ENCODE measurements at regions of chr3 and their contacts with region 1.

Region 1: DNA sequence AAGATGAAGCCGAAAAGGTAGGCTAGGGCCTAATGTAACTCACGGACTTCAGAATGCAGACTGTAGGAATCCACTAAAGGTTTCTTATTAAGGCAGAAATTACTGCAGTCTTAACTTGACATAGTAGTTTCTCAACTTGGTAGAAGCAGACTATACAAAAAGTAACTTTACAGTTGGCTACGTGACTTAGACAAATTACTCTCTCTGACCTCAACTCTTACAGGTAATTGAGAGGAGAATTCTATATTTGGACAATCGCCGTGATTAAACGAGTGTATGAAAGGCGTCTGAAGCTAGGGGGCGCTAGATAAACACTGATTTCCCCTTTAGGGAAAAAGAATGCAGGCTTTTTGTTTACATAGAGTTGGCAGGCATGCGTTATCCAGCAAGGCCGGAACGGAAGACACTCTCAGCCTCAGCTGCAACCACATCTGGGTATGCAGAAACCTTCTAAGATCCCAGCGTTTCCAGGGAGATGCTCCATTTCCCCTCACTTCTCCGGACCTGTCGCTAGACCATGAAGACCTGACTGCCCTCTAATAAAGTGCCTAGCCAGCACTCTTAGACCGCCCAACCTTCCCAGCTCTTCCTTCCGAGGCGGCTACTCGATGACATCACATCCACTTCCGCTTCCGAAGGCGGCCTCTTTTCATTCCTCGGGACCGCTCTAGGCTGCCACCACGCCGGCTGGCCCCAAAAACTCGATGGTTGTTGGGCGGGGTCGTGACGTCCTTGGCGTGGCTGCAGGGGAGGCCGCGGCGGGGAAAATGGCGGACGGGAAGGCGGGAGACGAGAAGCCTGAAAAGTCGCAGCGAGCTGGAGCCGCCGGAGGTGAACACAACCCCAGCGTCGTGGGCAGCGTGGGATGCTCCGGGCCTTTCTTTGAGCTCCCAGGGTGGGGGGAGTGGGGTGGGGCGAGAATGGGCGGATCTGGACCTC is at the start of gene PCNP:
- DNase-seq: peak; percentile 100
- H3K4me3 Mint-ChIP-seq: peak within 1 kb of the TSS; percentile 91
- H3K27ac Mint-ChIP-seq: peak within 1 kb of the TSS; percentile 94
- H3K4me1 Mint-ChIP-seq: peaks cover 61% of the 10 kb centered on the region
- H3K27me3 Mint-ChIP-seq: no peaks in the 10 kb centered on the region
- total RNA-seq, gene PCNP: 231 to 236 TPM

Region 2: GRCh38 chr3:100708967-100709841 is 864.5 kb before region 1 on chr3 and contains the start of gene TFG:
- CTCF ChIA-PET with region 1: no interaction called
- POLR2A ChIA-PET with region 1: interaction called, 3 read pairs
- intact Hi-C with region 1: loop called (anchors 1 kb)
- DNase-seq: peak; percentile 98
- H3K4me3 Mint-ChIP-seq: peak within 1 kb of the TSS; percentile 81
- H3K27ac Mint-ChIP-seq: peak within 1 kb of the TSS; percentile 95
- H3K4me1 Mint-ChIP-seq: peaks cover 40% of the 10 kb centered on the region
- H3K27me3 Mint-ChIP-seq: peaks cover 9% of the 10 kb centered on the region
- total RNA-seq, gene TFG: 55.5 to 60.3 TPM

Region 3: GRCh38 chr3:101466465-101467309 is 107.0 kb before region 1 on chr3:
- CTCF ChIA-PET with region 1: interaction called, 3 read pairs
- POLR2A ChIA-PET with region 1: no interaction called
- intact Hi-C with region 1: loop called (anchors 5 kb)
- DNase-seq: peak; percentile 86
- H3K4me3 Mint-ChIP-seq: peak overlapping the region; percentile 74
- H3K27ac Mint-ChIP-seq: peak overlapping the region; percentile 84
- H3K4me1 Mint-ChIP-seq: peaks cover 51% of the 10 kb centered on the region
- H3K27me3 Mint-ChIP-seq: no peaks in the 10 kb centered on the region

Region 4: GRCh38 chr3:101561630-101562328 is 11.9 kb before region 1 on chr3 and contains the start of gene TRMT10C:
- CTCF ChIA-PET with region 1: interaction called, 24 read pairs
- POLR2A ChIA-PET with region 1: interaction called, 23 read pairs
- intact Hi-C with region 1: loop called (anchors 1 kb)
- DNase-seq: peak; percentile 96
- H3K4me3 Mint-ChIP-seq: peak within 1 kb of the TSS; percentile 97
- H3K27ac Mint-ChIP-seq: peak within 1 kb of the TSS; percentile 96
- H3K4me1 Mint-ChIP-seq: peaks cover 37% of the 10 kb centered on the region
- H3K27me3 Mint-ChIP-seq: peaks cover 3% of the 10 kb centered on the region
- total RNA-seq, gene TRMT10C: 39.5 to 43.2 TPM

Region 5: DNA sequence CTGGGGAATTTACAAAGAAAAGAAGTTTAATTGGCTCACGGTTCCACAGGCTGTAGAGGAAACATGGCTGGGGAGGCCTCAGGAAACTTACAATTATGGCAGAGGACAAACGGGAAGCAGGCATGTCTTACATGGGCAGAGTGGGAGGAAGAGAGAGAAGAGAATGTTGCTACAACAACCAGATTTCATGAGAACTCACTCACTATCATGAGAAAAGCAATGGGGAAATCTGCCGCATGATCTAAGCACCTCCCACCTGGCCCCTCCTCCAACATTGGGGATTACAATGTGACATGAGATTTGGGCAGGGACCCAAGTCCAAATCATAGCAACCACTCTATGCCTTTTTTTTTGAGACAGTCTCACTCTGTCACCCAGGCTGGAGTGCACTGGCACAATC is 29.0 kb after region 1 on chr3:
- CTCF ChIA-PET with region 1: no interaction called
- POLR2A ChIA-PET with region 1: no interaction called
- intact Hi-C with region 1: no loop called
- DNase-seq: no peak
- H3K4me3 Mint-ChIP-seq: no peak overlapping the region
- H3K27ac Mint-ChIP-seq: no peak overlapping the region
- H3K4me1 Mint-ChIP-seq: no peaks in the 10 kb centered on the region
- H3K27me3 Mint-ChIP-seq: no peaks in the 10 kb centered on the region

Region 6: DNA sequence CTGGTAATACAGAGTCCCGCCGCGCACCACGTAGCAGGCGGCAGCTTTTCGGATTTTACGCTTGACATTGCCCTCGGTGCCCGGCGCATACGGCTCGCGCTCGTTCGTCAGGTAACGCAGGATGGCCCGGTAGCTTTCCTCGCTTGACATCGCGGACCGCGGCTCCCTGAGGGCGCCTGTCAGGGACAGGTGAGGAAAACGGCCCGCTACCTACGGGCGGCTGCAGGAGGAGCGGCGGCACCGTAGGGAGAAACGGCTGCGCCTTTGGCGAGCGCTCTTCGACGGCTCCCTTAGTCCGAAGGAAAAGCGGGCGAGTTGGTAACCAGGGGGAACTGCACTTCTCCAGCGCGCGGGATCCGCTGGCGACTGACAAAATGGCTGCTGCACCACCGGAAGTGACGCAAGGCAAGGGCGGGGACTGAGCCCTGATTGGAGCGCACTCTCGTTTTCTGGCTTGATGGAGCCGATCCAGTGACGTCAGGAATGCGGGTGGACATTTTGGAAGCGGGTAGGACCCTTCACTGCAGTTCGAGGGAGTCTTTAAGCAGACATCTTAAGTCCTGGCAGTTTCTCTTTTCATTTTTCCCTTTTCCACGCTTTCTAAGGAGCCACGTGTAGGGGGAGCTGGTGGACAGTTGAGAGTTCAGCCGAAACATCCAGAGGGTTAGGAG is 103.2 kb after region 1 on chr3 and contains the start of gene ZBTB11:
- CTCF ChIA-PET with region 1: interaction called, 13 read pairs
- POLR2A ChIA-PET with region 1: interaction called, 29 read pairs
- intact Hi-C with region 1: loop called (anchors 1 kb)
- DNase-seq: peak; percentile 100
- H3K4me3 Mint-ChIP-seq: peak within 1 kb of the TSS; percentile 93
- H3K27ac Mint-ChIP-seq: peak within 1 kb of the TSS; percentile 91
- H3K4me1 Mint-ChIP-seq: peaks cover 57% of the 10 kb centered on the region
- H3K27me3 Mint-ChIP-seq: no peaks in the 10 kb centered on the region
- total RNA-seq, gene ZBTB11: 28.0 to 30.3 TPM

Region 7: GRCh38 chr3:101779047-101779821 is 205.5 kb after region 1 on chr3 and contains the start of gene NXPE3:
- CTCF ChIA-PET with region 1: no interaction called
- POLR2A ChIA-PET with region 1: no interaction called
- intact Hi-C with region 1: loop called (anchors 2 kb)
- DNase-seq: peak; percentile 96
- H3K4me3 Mint-ChIP-seq: peak within 1 kb of the TSS; percentile 95
- H3K27ac Mint-ChIP-seq: peak within 1 kb of the TSS; percentile 95
- H3K4me1 Mint-ChIP-seq: peaks cover 51% of the 10 kb centered on the region
- H3K27me3 Mint-ChIP-seq: no peaks in the 10 kb centered on the region
- total RNA-seq, gene NXPE3: 18.7 to 19.8 TPM